H1 (cell line): ENCODE measurements at regions of chr14 and their contacts with region 1.

Region 1: GRCh38 chr14:75654127-75654732 is 6.4 kb downstream of the ERG28 start:
- DNase-seq: peak; percentile 64 to 95
- H3K4me3 ChIP-seq: no peak overlapping the region
- H3K27ac ChIP-seq: no peak overlapping the region
- H3K4me1 ChIP-seq: no peaks in the 10 kb centered on the region
- H3K27me3 ChIP-seq: no peaks in the 10 kb centered on the region
- CTCF ChIP-seq: peak; percentile 91 to 99 (median 94)
- EP300 ChIP-seq: no peak
- POLR2A ChIP-seq: no peak
- RAD21 ChIP-seq: peak; percentile 86 to 91

Region 2: GRCh38 chr14:75560962-75561432 is 93.2 kb before region 1 on chr14:
- CTCF ChIA-PET with region 1: interaction called, 348 read pairs
- POLR2A ChIA-PET with region 1: interaction called, 4 read pairs
- DNase-seq: peak; percentile 79 to 88
- H3K4me3 ChIP-seq: no peak overlapping the region
- H3K27ac ChIP-seq: no peak overlapping the region
- H3K4me1 ChIP-seq: peaks cover 0 to 4% (median 2%) of the 10 kb centered on the region in 4 experiments; a peak in 3 of 7 replicates
- H3K27me3 ChIP-seq: no peaks in the 10 kb centered on the region
- CTCF ChIP-seq: peak; percentile 87 to 97 (median 90)
- EP300 ChIP-seq: peak in 1 of 2 experiments; percentile 67; a peak in 1 of 3 replicates
- POLR2A ChIP-seq: no peak
- RAD21 ChIP-seq: peak; percentile 90 to 93

Region 3: GRCh38 chr14:75604856-75605851 is 49.1 kb before region 1 on chr14:
- CTCF ChIA-PET with region 1: interaction called, 10 read pairs
- POLR2A ChIA-PET with region 1: no interaction called
- DNase-seq: no peak
- H3K4me3 ChIP-seq: no peak overlapping the region
- H3K27ac ChIP-seq: no peak overlapping the region
- H3K4me1 ChIP-seq: no peaks in the 10 kb centered on the region
- H3K27me3 ChIP-seq: no peaks in the 10 kb centered on the region
- CTCF ChIP-seq: no peak
- EP300 ChIP-seq: no peak
- POLR2A ChIP-seq: no peak
- RAD21 ChIP-seq: no peak

Region 4: GRCh38 chr14:75615200-75615599 is 39.0 kb before region 1 on chr14:
- CTCF ChIA-PET with region 1: interaction called, 15 read pairs
- POLR2A ChIA-PET with region 1: no interaction called
- DNase-seq: no peak
- H3K4me3 ChIP-seq: no peak overlapping the region
- H3K27ac ChIP-seq: no peak overlapping the region
- H3K4me1 ChIP-seq: no peaks in the 10 kb centered on the region
- H3K27me3 ChIP-seq: no peaks in the 10 kb centered on the region
- CTCF ChIP-seq: no peak
- EP300 ChIP-seq: no peak
- POLR2A ChIP-seq: no peak
- RAD21 ChIP-seq: no peak

Region 5: DNA sequence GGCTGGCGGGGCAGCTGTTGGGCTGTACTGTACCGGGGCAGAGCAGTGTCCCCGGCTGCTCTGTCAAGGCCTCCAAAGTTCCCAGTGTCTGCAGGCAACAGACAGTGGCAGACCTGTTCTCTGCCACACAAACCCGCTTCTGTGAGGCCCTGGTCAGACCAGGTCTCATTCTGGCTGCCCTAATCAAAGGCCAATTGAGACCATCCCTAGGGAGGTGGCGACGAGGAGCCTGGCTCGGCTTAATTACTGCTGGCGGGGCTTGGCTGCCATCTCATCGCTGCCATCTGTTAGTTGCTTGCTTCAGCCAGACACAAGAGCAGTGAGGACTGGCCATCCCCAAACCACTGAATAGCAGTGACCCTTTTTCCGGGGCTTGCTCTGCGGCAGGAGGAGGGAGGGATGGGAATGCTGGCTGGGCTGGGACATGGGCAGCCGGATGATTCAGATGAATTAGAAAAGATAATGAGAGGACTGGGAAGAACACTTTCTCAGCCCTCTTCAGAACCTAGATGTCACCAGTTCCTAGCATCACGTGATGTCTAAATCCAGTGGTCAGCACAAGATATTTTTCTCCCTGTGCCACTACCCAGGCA is 18.0 kb before region 1 on chr14:
- CTCF ChIA-PET with region 1: interaction called, 14 read pairs
- POLR2A ChIA-PET with region 1: interaction called, 7 read pairs
- DNase-seq: no peak
- H3K4me3 ChIP-seq: no peak overlapping the region
- H3K27ac ChIP-seq: no peak overlapping the region
- H3K4me1 ChIP-seq: peaks cover 4 to 19% (median 14%) of the 10 kb centered on the region in 4 experiments
- H3K27me3 ChIP-seq: no peaks in the 10 kb centered on the region
- CTCF ChIP-seq: no peak
- EP300 ChIP-seq: no peak
- POLR2A ChIP-seq: no peak
- RAD21 ChIP-seq: no peak